HEK293 (cell line): ENCODE measurements at regions of chr9 and their contacts with region 1.

Region 1: DNA sequence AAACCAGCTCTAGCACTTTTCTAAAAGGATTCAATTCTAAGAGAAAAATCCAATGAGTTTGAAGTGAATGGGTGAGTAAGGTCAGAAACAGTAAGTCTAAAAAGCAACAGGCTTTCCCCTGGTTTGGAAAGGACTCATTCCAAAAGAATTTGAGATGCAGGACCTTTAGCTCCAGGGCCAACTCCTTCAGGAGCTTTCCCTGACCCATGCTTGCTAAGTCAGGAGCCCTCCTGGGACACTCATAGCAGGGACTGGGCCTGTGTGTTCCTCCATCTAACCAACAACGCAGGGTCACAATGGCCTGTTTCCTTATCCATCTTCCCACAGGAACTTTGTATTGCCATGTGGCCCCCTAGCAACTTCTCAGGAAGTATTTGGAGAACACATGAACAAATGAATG is 198.8 kb downstream of the FRMD3 start:
- H3K4me3 ChIP-seq: no peak overlapping the region
- H3K27ac ChIP-seq: no peak overlapping the region
- H3K4me1 ChIP-seq: no peaks in the 10 kb centered on the region
- CTCF ChIP-seq: no peak

Region 2: GRCh38 chr9:83257937-83258891 is 81.2 kb before region 1 on chr9:
- CTCF ChIA-PET with region 1: no interaction called
- POLR2A ChIA-PET with region 1: no interaction called
- H3K4me3 ChIP-seq: no peak overlapping the region
- H3K27ac ChIP-seq: no peak overlapping the region
- H3K4me1 ChIP-seq: no peaks in the 10 kb centered on the region
- CTCF ChIP-seq: no peak

Region 3: GRCh38 chr9:83544002-83544698 is 204.7 kb after region 1 on chr9:
- CTCF ChIA-PET with region 1: interaction called, 91 read pairs
- POLR2A ChIA-PET with region 1: interaction called, 4 read pairs
- H3K4me3 ChIP-seq: no peak overlapping the region
- H3K27ac ChIP-seq: no peak overlapping the region
- H3K4me1 ChIP-seq: no peaks in the 10 kb centered on the region
- CTCF ChIP-seq: no peak